ENCODE measurements at regions of chr1 and their contacts with region 1.

Region 1: GRCh38 chr1:53765657-53766056 is 26.7 kb upstream of the GLIS1 start:
- DNase-seq: no peak
- H3K4me3 Mint-ChIP-seq: peak overlapping the region; percentile 15
- H3K27ac Mint-ChIP-seq: peak overlapping the region; percentile 81
- H3K4me1 Mint-ChIP-seq: peaks cover 34% of the 10 kb centered on the region
- H3K27me3 Mint-ChIP-seq: no peaks in the 10 kb centered on the region

Region 2: DNA sequence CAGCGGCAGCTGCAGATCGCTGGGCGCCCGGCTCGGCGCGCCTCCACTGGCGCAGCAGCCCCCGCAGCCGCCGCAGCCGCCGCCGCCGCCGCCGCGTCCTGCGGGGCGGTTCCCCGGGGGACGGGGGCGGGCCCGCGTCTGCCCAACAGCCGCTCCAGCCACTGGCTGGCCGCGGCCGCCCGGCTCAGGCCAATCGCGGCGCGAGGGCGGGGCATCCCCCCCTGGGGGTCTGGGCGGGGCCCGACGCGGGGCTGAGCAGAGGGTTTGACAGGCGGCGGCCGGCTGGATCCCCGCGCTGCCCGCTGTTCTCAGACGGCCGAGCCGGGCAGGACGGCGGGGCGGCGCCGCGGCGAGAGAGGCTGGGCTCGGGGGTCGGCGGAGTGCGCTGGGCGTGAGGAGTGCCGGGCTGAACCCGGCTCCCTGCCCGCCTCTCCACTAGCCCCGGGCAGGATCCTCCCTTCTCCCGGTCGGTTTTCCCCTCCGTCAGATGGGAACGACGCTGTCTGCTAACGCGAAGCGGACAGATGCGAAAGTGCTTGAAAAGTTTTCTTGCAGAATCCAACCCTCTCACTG is 26.5 kb before region 1 on chr1 and contains the start of gene GLIS1:
- intact Hi-C with region 1: loop called (anchors 2 kb)
- DNase-seq: peak; percentile 62
- H3K4me3 Mint-ChIP-seq: peak within 1 kb of the TSS; percentile 49
- H3K27ac Mint-ChIP-seq: no peak within 1 kb of the TSS
- H3K4me1 Mint-ChIP-seq: no peaks in the 10 kb centered on the region
- H3K27me3 Mint-ChIP-seq: peaks cover 67% of the 10 kb centered on the region
- total RNA-seq, gene GLIS1: 0.05 TPM in 1 of 2 replicates, not detected in the other

Region 3: GRCh38 chr1:53781654-53782053 is 16.0 kb after region 1 on chr1:
- intact Hi-C with region 1: loop called (anchors 1 kb)
- DNase-seq: no peak
- H3K4me3 Mint-ChIP-seq: no peak overlapping the region
- H3K27ac Mint-ChIP-seq: no peak overlapping the region
- H3K4me1 Mint-ChIP-seq: peaks cover 31% of the 10 kb centered on the region
- H3K27me3 Mint-ChIP-seq: no peaks in the 10 kb centered on the region

Measured in activated T-helper 1 cell treated with anti-CD3 and anti-CD28 coated beads, Interleukin-12 subunit alpha, Interleukin-12 subunit beta, Interleukin-2, Interleukin-4 antibody, amounts not matched to agents 30 ng/mL and 10 ng/mL and 1 ng/mL, durations not matched to agents 14 hours and 24 hours and 36 hours (primary cell).